Calu3 (cell line): ENCODE measurements at regions of chr17 and their contacts with region 1.

Region 1: DNA sequence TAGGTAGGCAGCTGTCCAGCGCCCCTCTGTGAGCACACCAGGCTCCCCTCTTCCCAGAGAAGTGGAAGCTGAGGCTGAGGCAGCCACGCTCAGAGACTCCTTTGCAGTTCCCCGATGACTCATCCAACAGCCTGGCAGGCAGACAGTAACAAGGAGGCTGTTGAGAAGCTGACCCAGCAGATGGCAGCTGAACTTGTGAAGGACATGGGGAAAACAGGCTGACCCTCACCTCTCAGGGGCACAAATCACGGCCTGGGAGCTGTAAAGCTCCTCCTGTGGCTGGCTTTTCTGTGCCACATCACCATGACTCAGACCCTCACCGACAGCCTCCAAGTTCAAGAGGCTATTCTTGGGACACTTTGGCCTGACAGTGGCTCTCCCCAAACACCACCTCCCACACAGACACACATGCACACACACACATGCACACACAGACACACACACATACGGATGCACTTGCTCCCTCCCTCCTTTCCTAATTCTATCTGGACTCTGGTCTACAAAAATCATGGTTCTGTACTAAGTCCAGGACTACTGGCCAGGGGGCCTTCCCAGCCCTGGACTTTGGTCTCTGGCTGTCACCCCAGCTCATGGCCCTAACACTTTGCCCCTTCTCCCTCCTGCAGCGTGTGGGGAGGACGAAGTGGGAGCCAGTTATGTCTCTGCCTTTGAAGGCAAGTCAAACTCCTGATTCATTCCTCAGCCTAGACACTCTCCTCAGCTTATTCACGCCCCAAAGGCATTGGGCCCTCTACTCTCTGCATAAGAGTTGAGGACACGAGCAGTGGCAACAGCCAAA is 23.2 kb downstream of the MAP3K14 start:
- DNase-seq: peak; percentile 81
- H3K4me3 Mint-ChIP-seq: peak overlapping the region; percentile 21
- H3K27ac Mint-ChIP-seq: peak overlapping the region; percentile 66
- H3K4me1 Mint-ChIP-seq: peaks cover 73% of the 10 kb centered on the region
- H3K27me3 Mint-ChIP-seq: no peaks in the 10 kb centered on the region
- CTCF ChIP-seq: no peak

Region 2: GRCh38 chr17:45371414-45372327 is 78.1 kb after region 1 on chr17:
- CTCF ChIA-PET with region 1: interaction called, 12 read pairs
- intact Hi-C with region 1: no loop called
- DNase-seq: peak; percentile 100
- H3K4me3 Mint-ChIP-seq: peak overlapping the region; percentile 78
- H3K27ac Mint-ChIP-seq: peak overlapping the region; percentile 88
- H3K4me1 Mint-ChIP-seq: peaks cover 44% of the 10 kb centered on the region
- H3K27me3 Mint-ChIP-seq: no peaks in the 10 kb centered on the region
- CTCF ChIP-seq: no peak

Region 3: DNA sequence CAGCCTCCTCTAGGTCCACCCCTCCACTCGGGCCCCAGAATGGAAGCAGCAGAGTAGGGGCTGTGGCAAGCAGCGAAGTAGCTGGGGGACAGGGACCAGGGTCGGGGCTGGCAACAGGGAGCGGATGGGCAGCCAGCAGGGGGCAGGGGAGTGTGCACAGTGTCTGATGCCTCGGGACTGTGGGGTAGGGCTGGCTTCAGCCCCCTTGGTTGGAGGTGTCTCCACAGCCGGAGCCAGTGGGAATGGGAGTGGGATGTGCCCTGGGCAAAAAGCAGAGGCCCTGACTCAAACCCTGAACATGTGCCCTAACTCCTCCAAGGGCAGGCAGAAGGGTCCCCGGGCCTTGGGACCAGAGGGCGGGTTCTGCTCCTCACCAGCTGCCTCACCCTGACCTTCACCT is 157.5 kb after region 1 on chr17:
- CTCF ChIA-PET with region 1: no interaction called
- intact Hi-C with region 1: no loop called
- DNase-seq: no peak
- H3K4me3 Mint-ChIP-seq: no peak overlapping the region
- H3K27ac Mint-ChIP-seq: no peak overlapping the region
- H3K4me1 Mint-ChIP-seq: peaks cover 28% of the 10 kb centered on the region
- H3K27me3 Mint-ChIP-seq: no peaks in the 10 kb centered on the region
- CTCF ChIP-seq: no peak